KBM-7 (cell line): ENCODE measurements at regions of chr7 and their contacts with region 1.

Region 1: DNA sequence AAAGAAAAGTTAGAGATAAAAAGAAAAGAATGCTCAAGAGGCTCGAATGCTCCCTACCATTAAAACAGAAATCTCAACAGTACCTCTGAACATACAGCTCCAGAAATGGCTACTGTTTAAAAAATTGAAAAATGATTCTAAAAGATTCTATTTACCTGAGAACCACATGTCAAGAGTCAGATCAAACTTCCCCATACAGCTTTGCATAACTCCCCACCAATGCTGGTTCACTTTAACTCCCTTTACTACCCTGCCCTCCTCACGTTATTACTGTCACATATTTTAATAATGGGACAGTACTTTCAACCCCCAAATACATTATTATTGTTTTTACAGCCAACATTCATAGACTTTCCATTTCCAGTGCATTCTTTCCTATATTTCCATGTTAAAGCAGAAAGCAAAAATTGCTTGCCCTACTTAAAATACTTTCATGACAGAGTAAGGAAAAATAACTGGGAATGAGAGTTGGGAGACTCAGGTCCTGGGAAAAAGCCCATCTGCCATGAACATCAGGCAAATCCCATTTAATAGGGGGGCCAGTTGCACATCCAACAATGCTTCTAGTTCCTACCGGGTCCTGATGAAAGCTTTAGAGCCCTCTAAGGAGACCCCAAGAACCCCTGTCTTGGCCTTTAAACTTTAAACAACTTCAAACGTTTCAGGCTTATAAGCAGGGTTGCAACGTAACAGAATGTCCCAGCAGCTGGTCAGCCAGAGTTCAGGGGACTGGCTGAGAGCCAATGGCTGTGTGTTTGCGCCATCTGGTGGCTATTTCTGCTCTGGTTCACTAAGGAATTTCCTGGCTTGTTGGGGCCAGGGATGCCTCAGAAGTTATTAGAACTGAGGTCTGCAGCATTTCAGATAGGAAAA is 247.4 kb downstream of the ELMO1 start:
- DNase-seq: peak; percentile 71

Region 2: DNA sequence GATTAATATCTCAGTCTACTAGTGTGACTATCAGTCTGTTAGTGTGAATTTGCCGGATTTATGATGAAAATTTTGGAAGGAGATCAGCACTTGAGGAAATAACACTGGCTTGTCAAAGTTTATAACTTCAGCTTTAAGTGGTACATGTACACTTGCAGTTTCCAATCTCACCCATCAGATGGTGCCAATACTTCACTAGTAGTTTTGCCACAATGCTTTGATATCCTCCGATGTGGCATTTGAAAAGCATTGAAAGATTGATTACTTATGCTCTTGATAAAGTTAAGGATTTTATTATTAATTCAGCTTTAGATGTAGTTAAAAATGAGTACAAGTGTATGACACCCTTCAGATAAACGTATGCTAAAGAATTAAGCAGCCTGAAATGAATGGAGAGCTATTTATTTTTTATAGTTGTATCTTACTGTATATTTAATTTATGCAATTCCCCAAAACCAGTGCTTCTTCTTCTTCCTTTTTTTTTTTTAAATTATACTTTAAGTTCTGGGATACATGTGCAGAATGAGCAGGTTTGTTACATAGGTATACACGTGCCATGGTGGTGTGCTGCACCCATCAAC is 713.4 kb before region 1 on chr7:
- in situ Hi-C with region 1: loop called (anchors 10 kb)
- DNase-seq: peak; percentile 54

Region 3: GRCh38 chr7:37833107-37833817 is 632.0 kb after region 1 on chr7:
- in situ Hi-C with region 1: loop called (anchors 25 kb)
- DNase-seq: peak; percentile 30